ENCODE measurements at regions of chrX and their contacts with region 1.

Region 1: GRCh38 chrX:1537035-1537715 is at the start of gene P2RY8:
- DNase-seq: peak; percentile 56 to 88 (median 80)
- ATAC-seq: peak; percentile 91
- H3K4me3 ChIP-seq: peak within 1 kb of the TSS; percentile 81
- H3K4me3 Mint-ChIP-seq: peak within 1 kb of the TSS; percentile 89 to 99 (median 98)
- H3K27ac ChIP-seq: peak within 1 kb of the TSS; percentile 88
- H3K27ac Mint-ChIP-seq: peak within 1 kb of the TSS; percentile 98 to 100 (median 99)
- H3K4me1 ChIP-seq: peaks cover 3 to 6% of the 10 kb centered on the region in 2 donors
- H3K4me1 Mint-ChIP-seq: peaks cover 11 to 29% (median 20%) of the 10 kb centered on the region in 7 donors
- H3K27me3 ChIP-seq: no peaks in the 10 kb centered on the region
- H3K27me3 Mint-ChIP-seq: no peaks in the 10 kb centered on the region
- total RNA-seq, gene P2RY8: 109 to 158 (median 122) TPM

Region 2: DNA sequence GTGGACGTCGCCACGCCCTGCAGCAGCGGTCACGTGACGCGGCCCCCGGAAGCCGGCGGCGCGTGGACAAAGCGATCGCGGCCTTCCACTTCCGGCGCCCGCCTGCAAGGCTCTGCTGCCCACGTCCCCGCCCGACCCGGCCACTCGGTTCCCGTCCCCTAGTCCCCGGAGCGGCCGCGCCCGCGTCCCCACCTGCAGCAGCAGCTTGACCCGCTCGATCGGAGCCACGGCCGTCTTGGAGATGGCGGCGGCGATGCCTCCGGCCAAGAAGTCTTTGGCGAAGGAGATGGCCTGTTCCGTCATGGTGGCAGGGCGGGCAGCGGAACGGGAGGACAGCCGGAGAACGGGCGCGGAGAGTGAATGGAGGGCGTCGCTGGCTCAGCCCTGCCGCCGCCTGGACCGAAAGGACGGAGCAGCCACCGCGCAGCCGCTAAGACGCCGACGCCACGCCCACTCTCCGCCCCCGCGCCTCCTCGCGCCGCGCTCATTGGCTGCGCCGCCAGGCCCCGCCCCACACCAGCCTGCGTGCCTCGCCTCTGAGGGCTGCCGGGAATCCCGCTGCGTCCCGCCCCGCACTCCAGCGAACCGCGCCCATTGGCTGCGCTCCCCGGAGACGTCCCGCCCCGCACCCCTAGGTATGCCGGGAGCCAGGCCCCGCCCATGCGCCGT is 145.3 kb before region 1 on chrX and contains the start of gene SLC25A6:
- CTCF ChIA-PET with region 1: no interaction called
- POLR2A ChIA-PET with region 1: no interaction called
- intact Hi-C with region 1: loop called (anchors 1 to 2 kb)
- DNase-seq: peak; percentile 97 to 100 (median 100)
- ATAC-seq: peak; percentile 96
- H3K4me3 ChIP-seq: peak within 1 kb of the TSS; percentile 94
- H3K4me3 Mint-ChIP-seq: peak within 1 kb of the TSS; percentile 78 to 95 (median 92)
- H3K27ac ChIP-seq: peak within 1 kb of the TSS; percentile 97
- H3K27ac Mint-ChIP-seq: peak within 1 kb of the TSS; percentile 84 to 98 (median 91)
- H3K4me1 ChIP-seq: peaks cover 25 to 33% of the 10 kb centered on the region in 2 donors
- H3K4me1 Mint-ChIP-seq: peaks cover 35 to 71% (median 52%) of the 10 kb centered on the region in 7 donors
- H3K27me3 ChIP-seq: no peaks in the 10 kb centered on the region
- H3K27me3 Mint-ChIP-seq: no peaks in the 10 kb centered on the region
- total RNA-seq, gene SLC25A6: 238 to 341 (median 270) TPM

Region 3: DNA sequence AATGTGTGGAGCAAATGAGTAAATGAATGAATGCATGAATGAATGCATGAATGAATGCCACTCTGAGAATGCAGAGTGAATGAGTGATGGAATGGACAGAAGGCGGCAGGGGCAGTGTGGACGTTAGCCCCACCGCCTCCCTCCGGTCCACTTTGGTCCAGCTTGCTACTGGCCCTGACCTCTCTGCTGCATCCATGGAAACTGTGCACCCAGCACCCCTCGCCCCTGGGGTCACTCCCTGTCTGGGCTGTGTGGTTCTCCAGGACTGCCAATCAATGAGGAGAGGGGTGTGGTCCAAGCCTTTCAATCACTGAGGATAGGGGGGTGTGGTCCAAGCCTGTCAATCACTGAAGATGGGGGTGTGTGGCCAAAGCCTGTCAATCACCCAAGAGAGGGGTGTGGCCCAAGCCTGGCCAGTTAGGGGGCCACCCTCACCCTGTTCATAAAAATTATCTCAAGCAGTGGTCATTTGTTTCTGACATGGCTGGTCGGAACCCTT is 45.3 kb before region 1 on chrX:
- CTCF ChIA-PET with region 1: no interaction called
- POLR2A ChIA-PET with region 1: no interaction called
- intact Hi-C with region 1: loop called (anchors 2 kb)
- DNase-seq: peak in 8 of 9 donors; percentile 46 to 73 (median 54)
- ATAC-seq: peak; percentile 82
- H3K4me3 ChIP-seq: no peak overlapping the region
- H3K4me3 Mint-ChIP-seq: peak overlapping the region in 1 of 10 donors; percentile 30
- H3K27ac ChIP-seq: no peak overlapping the region
- H3K27ac Mint-ChIP-seq: peak overlapping the region in 8 of 9 donors; percentile 72 to 90 (median 84)
- H3K4me1 ChIP-seq: no peaks in the 10 kb centered on the region
- H3K4me1 Mint-ChIP-seq: peaks cover 20 to 56% (median 34%) of the 10 kb centered on the region in 7 donors
- H3K27me3 ChIP-seq: no peaks in the 10 kb centered on the region
- H3K27me3 Mint-ChIP-seq: peaks cover 0 to 2% (median 0%) of the 10 kb centered on the region in 5 donors

Region 4: GRCh38 chrX:1554469-1555210 is 17.5 kb after region 1 on chrX:
- CTCF ChIA-PET with region 1: no interaction called
- POLR2A ChIA-PET with region 1: no interaction called
- intact Hi-C with region 1: loop called (anchors 1 kb)
- DNase-seq: peak in 8 of 9 donors; percentile 28 to 92 (median 83)
- ATAC-seq: peak; percentile 97
- H3K4me3 ChIP-seq: peak overlapping the region; percentile 22
- H3K4me3 Mint-ChIP-seq: peak overlapping the region; percentile 55 to 81 (median 72)
- H3K27ac ChIP-seq: peak overlapping the region; percentile 72
- H3K27ac Mint-ChIP-seq: peak overlapping the region; percentile 91 to 100 (median 98)
- H3K4me1 ChIP-seq: peaks cover 47 to 55% of the 10 kb centered on the region in 2 donors
- H3K4me1 Mint-ChIP-seq: peaks cover 35 to 85% (median 56%) of the 10 kb centered on the region in 7 donors
- H3K27me3 ChIP-seq: no peaks in the 10 kb centered on the region
- H3K27me3 Mint-ChIP-seq: peaks cover 0 to 11% (median 0%) of the 10 kb centered on the region in 5 donors

Region 5: GRCh38 chrX:1591102-1591900 is 54.1 kb after region 1 on chrX and contains the start of gene AKAP17A:
- CTCF ChIA-PET with region 1: no interaction called
- POLR2A ChIA-PET with region 1: no interaction called
- intact Hi-C with region 1: loop called (anchors 1 kb)
- DNase-seq: peak; percentile 92 to 100 (median 99)
- ATAC-seq: peak; percentile 95
- H3K4me3 ChIP-seq: peak within 1 kb of the TSS; percentile 76
- H3K4me3 Mint-ChIP-seq: peak within 1 kb of the TSS; percentile 85 to 97 (median 91)
- H3K27ac ChIP-seq: peak within 1 kb of the TSS; percentile 91
- H3K27ac Mint-ChIP-seq: peak within 1 kb of the TSS; percentile 82 to 94 (median 91)
- H3K4me1 ChIP-seq: peaks cover 7 to 10% of the 10 kb centered on the region in 2 donors
- H3K4me1 Mint-ChIP-seq: peaks cover 5 to 50% (median 34%) of the 10 kb centered on the region in 7 donors
- H3K27me3 ChIP-seq: no peaks in the 10 kb centered on the region
- H3K27me3 Mint-ChIP-seq: no peaks in the 10 kb centered on the region
- total RNA-seq, gene AKAP17A: 75.7 to 165 (median 125) TPM

Region 6: DNA sequence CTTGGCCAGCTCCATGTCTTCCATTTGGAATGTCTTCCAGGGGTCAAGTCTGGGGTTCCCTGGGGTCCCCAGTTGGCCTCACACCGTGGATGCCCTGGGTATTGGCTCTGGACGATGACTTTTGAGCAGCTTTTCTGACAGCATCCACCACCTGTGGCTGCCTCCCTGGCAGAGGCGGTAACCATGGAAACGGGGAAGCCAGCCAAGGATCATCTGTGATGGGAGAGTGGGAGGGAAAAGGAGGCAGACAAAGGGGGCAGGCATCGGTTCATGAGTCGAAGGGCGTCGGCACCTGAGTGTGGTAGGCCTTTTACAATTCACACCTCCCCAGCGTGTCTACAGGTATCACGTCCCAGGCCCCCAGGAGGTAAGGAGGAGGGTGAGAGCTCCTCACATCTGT is 229.8 kb after region 1 on chrX:
- CTCF ChIA-PET with region 1: no interaction called
- POLR2A ChIA-PET with region 1: no interaction called
- intact Hi-C with region 1: no loop called
- DNase-seq: no peak
- ATAC-seq: no peak
- H3K4me3 ChIP-seq: no peak overlapping the region
- H3K4me3 Mint-ChIP-seq: peak overlapping the region in 1 of 10 donors; percentile 38
- H3K27ac ChIP-seq: no peak overlapping the region
- H3K27ac Mint-ChIP-seq: no peak overlapping the region
- H3K4me1 ChIP-seq: peaks cover 0 to 5% of the 10 kb centered on the region in 2 donors
- H3K4me1 Mint-ChIP-seq: peaks cover 0 to 5% (median 0%) of the 10 kb centered on the region in 7 donors
- H3K27me3 ChIP-seq: no peaks in the 10 kb centered on the region
- H3K27me3 Mint-ChIP-seq: peaks cover 0 to 5% (median 0%) of the 10 kb centered on the region in 5 donors

Region 7: DNA sequence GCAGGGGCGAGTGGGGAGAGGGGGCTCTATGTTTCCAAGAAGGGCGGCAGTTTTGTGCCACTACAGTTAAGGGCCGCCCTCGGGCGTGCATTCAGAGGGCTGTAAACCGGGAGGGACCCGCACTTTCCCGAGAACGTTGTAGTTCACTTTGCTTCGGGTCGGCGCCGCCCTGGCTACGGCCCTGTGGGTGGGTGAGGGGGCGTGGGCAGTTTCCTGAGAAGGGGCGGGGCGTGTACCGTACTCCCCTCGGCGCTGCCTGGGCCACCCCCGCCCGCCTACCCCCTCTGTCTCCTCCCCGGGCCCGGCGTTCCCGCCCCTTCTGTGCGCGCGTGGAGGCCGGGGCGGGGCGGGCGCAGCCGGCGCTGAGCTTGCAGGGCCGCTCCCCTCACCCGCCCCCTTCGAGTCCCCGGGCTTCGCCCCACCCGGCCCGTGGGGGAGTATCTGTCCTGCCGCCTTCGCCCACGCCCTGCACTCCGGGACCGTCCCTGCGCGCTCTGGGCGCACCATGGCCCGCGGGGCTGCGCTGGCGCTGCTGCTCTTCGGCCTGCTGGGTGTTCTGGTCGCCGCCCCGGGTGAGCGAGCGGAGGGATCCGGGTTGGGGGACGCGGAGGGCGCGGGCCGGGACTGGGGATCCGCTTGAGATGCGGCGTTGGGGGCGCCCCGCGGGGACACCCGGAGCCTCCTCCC is 1153.8 kb after region 1 on chrX and contains the start of gene CD99:
- CTCF ChIA-PET with region 1: no interaction called
- POLR2A ChIA-PET with region 1: no interaction called
- intact Hi-C with region 1: loop called (anchors 2 to 5 kb)
- DNase-seq: peak; percentile 81 to 93 (median 85)
- ATAC-seq: peak; percentile 96
- H3K4me3 ChIP-seq: peak within 1 kb of the TSS; percentile 91
- H3K4me3 Mint-ChIP-seq: peak within 1 kb of the TSS; percentile 87 to 98 (median 95)
- H3K27ac ChIP-seq: peak within 1 kb of the TSS; percentile 83
- H3K27ac Mint-ChIP-seq: peak within 1 kb of the TSS; percentile 80 to 95 (median 91)
- H3K4me1 ChIP-seq: peaks cover 31 to 33% of the 10 kb centered on the region in 2 donors
- H3K4me1 Mint-ChIP-seq: peaks cover 36 to 42% (median 39%) of the 10 kb centered on the region in 7 donors
- H3K27me3 ChIP-seq: no peaks in the 10 kb centered on the region
- H3K27me3 Mint-ChIP-seq: peaks cover 0 to 11% (median 0%) of the 10 kb centered on the region in 5 donors
- total RNA-seq, gene CD99: 112 to 293 (median 181) TPM

Measured in naive thymus-derived CD4-positive, alpha-beta T cell (primary cell).